ENCODE measurements at regions of chr17 and their contacts with region 1.

Region 1: DNA sequence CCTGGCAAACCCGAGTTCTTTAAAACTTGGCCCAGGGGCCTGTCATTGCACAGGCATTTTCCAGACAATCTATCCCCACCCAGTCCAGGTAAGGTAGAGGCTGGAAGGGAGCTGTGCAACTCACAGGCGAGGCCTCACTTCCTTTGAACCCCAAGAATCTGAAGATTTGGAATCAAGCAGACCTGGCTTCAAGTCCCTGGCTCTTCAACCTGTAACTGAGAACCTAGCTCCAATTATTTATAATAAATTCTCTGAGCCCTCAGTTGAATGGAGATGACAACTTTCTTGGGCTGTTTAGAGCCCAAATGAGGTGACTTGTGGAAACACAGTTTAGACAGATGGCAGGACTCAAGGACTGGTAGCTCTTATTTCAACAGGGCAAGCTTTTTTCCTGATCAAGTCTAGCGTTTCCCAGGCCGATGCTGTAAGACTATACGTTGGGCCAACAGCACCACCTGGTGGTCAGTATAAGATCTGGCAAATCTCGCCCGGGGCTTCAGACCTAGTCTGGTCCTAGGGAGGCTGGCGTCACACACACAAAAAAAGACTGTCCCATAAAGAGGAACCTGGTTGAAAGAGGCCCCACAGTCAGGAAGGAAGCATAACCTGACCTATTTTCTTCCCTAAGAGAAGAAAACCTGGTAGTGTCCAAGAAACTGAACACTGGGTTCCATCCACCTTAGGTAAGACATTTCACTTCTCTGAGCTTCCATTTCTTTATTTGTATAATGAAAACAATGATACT is 117.9 kb downstream of the C17orf67 start:
- DNase-seq: peak; percentile 89
- ATAC-seq: peak; percentile 95
- H3K4me3 Mint-ChIP-seq: no peak overlapping the region
- H3K27ac Mint-ChIP-seq: no peak overlapping the region
- H3K4me1 Mint-ChIP-seq: peaks cover 3% of the 10 kb centered on the region
- H3K27me3 Mint-ChIP-seq: no peaks in the 10 kb centered on the region

Region 2: GRCh38 chr17:55883149-55883548 is 832.6 kb before region 1 on chr17:
- CTCF ChIA-PET with region 1: no interaction called
- POLR2A ChIA-PET with region 1: no interaction called
- intact Hi-C with region 1: no loop called
- DNase-seq: no peak
- ATAC-seq: no peak
- H3K4me3 Mint-ChIP-seq: no peak overlapping the region
- H3K27ac Mint-ChIP-seq: no peak overlapping the region
- H3K4me1 Mint-ChIP-seq: no peaks in the 10 kb centered on the region
- H3K27me3 Mint-ChIP-seq: no peaks in the 10 kb centered on the region

Region 3: GRCh38 chr17:56125830-56126819 is 589.7 kb before region 1 on chr17:
- CTCF ChIA-PET with region 1: interaction called, 5 read pairs
- POLR2A ChIA-PET with region 1: no interaction called
- intact Hi-C with region 1: loop called in 1 of 2 experiments (anchors 5 kb)
- DNase-seq: peak; percentile 13
- ATAC-seq: no peak
- H3K4me3 Mint-ChIP-seq: no peak overlapping the region
- H3K27ac Mint-ChIP-seq: no peak overlapping the region
- H3K4me1 Mint-ChIP-seq: no peaks in the 10 kb centered on the region
- H3K27me3 Mint-ChIP-seq: no peaks in the 10 kb centered on the region

Region 4: GRCh38 chr17:56389356-56389755 is 326.4 kb before region 1 on chr17:
- CTCF ChIA-PET with region 1: no interaction called
- POLR2A ChIA-PET with region 1: no interaction called
- intact Hi-C with region 1: no loop called
- DNase-seq: no peak
- ATAC-seq: no peak
- H3K4me3 Mint-ChIP-seq: no peak overlapping the region
- H3K27ac Mint-ChIP-seq: no peak overlapping the region
- H3K4me1 Mint-ChIP-seq: no peaks in the 10 kb centered on the region
- H3K27me3 Mint-ChIP-seq: no peaks in the 10 kb centered on the region

Region 5: GRCh38 chr17:56592487-56593085 is 123.2 kb before region 1 on chr17:
- CTCF ChIA-PET with region 1: interaction called, 109 read pairs
- POLR2A ChIA-PET with region 1: interaction called, 4 read pairs
- intact Hi-C with region 1: loop called (anchors 1 kb)
- DNase-seq: peak; percentile 82
- ATAC-seq: peak; percentile 60
- H3K4me3 Mint-ChIP-seq: peak overlapping the region; percentile 64
- H3K27ac Mint-ChIP-seq: no peak overlapping the region
- H3K4me1 Mint-ChIP-seq: peaks cover 20% of the 10 kb centered on the region
- H3K27me3 Mint-ChIP-seq: peaks cover 23% of the 10 kb centered on the region

Region 6: DNA sequence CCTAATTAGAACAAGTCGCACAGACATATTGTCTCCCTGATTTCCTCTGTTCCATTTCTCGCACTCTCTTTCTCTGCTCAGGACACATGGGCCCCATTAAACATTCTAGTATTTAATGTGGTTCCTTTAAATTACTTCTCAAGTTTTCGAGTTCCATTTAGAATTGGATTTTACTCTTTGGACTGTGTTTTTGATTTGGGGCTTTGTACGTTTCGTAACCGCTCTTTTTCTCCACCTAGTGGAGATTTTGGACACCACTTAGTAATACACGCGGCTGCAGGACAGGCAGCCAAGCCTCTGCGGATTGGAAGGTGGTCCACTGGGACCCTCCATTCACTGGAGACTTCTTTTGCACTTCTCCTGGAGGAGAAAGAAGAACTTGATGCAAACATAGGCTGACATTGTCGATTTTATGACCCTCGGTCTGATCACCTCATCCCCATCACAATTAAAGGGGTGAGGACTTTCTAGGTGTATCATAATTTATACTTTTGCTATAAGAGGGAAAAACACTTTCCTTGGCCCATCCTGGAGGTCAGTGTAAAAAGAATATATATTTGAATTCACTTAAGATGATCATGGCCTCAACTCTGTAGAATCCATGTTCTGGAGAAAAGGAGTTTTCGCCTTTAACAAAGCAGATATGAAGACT is 36.5 kb before region 1 on chr17:
- CTCF ChIA-PET with region 1: interaction called, 14 read pairs
- POLR2A ChIA-PET with region 1: interaction called, 4 read pairs
- intact Hi-C with region 1: loop called in 1 of 2 experiments (anchors 2 kb)
- DNase-seq: peak; percentile 19
- ATAC-seq: peak; percentile 34
- H3K4me3 Mint-ChIP-seq: peak overlapping the region; percentile 63
- H3K27ac Mint-ChIP-seq: no peak overlapping the region
- H3K4me1 Mint-ChIP-seq: peaks cover 24% of the 10 kb centered on the region
- H3K27me3 Mint-ChIP-seq: peaks cover 42% of the 10 kb centered on the region

Region 7: GRCh38 chr17:56735842-56736241 is 20.1 kb after region 1 on chr17:
- CTCF ChIA-PET with region 1: interaction called, 12 read pairs
- POLR2A ChIA-PET with region 1: no interaction called
- intact Hi-C with region 1: no loop called
- DNase-seq: no peak
- ATAC-seq: no peak
- H3K4me3 Mint-ChIP-seq: no peak overlapping the region
- H3K27ac Mint-ChIP-seq: no peak overlapping the region
- H3K4me1 Mint-ChIP-seq: no peaks in the 10 kb centered on the region
- H3K27me3 Mint-ChIP-seq: peaks cover under 1% of the 10 kb centered on the region

Region 8: GRCh38 chr17:56779898-56780733 is 64.3 kb after region 1 on chr17:
- CTCF ChIA-PET with region 1: interaction called, 26 read pairs
- POLR2A ChIA-PET with region 1: no interaction called
- intact Hi-C with region 1: loop called (anchors 1 kb)
- DNase-seq: peak; percentile 93
- ATAC-seq: peak; percentile 95
- H3K4me3 Mint-ChIP-seq: peak overlapping the region; percentile 77
- H3K27ac Mint-ChIP-seq: peak overlapping the region; percentile 91
- H3K4me1 Mint-ChIP-seq: peaks cover 24% of the 10 kb centered on the region
- H3K27me3 Mint-ChIP-seq: peaks cover 1% of the 10 kb centered on the region

Region 9: GRCh38 chr17:56918916-56919639 is 203.3 kb after region 1 on chr17:
- CTCF ChIA-PET with region 1: no interaction called
- POLR2A ChIA-PET with region 1: no interaction called
- intact Hi-C with region 1: no loop called
- DNase-seq: no peak
- ATAC-seq: no peak
- H3K4me3 Mint-ChIP-seq: no peak overlapping the region
- H3K27ac Mint-ChIP-seq: peak overlapping the region; percentile 53
- H3K4me1 Mint-ChIP-seq: peaks cover 47% of the 10 kb centered on the region
- H3K27me3 Mint-ChIP-seq: no peaks in the 10 kb centered on the region